H1 (cell line): ENCODE measurements at regions of chr2 and their contacts with region 1.

Region 1: DNA sequence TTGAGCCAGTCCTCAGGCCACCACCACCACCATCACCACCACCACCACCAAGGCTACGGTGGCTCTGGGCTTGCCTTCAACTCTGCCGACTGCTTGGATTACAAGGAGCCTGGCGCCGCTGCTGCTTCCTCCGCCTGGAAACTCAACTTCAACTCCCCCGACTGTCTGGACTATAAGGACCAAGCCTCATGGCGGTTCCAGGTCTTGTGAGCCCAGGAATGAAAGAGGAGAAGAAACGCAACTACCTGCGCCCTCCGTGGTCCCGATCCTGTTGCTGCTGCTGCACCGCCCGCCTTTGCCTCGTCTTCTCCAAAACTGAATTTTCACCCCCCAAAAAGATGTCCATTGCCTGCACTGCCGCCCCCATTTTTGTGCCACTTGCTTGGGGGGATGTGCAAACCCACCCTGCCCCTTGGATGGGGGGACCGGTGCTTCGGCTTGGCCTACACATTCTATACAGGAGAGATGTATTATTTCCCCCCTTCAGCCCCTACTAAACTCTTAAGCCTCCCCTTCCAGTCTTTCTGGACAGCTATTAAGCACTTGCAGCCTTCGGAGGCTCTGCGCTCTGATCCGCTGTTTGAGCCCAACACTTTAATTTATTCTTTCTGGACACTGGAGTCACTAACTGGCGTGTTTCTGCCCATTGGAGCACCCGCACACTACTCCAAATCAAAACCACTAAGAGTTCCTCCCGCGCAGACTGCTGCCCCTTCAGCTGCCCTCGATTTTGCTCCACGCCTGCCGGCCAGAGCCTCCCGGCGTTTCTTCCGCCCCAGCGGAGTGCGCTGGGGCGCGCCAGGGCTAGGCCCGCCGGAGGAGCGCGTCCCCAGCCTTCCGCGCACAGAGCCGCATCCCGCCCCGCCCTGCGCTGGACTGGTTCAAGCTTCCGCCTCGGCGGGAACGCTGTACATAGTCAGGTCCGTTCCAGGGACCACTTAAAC is 5.7 kb downstream of the OTX1 start:
- DNase-seq: peak in 1 of 2 experiments; percentile 56
- H3K4me3 ChIP-seq: peak overlapping the region in 2 of 4 experiments; percentile 7 to 74; a peak in 5 of 8 replicates
- H3K27ac ChIP-seq: no peak overlapping the region
- H3K4me1 ChIP-seq: peaks cover 9 to 60% (median 48%) of the 10 kb centered on the region in 4 experiments
- H3K27me3 ChIP-seq: peaks cover 74 to 99% (median 93%) of the 10 kb centered on the region in 4 experiments
- CTCF ChIP-seq: peak in 1 of 3 experiments; percentile 3; a peak in 1 of 4 replicates
- EP300 ChIP-seq: no peak
- POLR2A ChIP-seq: no peak
- RAD21 ChIP-seq: no peak

Region 2: GRCh38 chr2:63044362-63045327 is 11.7 kb before region 1 on chr2:
- CTCF ChIA-PET with region 1: interaction called, 50 read pairs
- POLR2A ChIA-PET with region 1: interaction called, 32 read pairs
- DNase-seq: peak in 1 of 2 experiments; percentile 82
- H3K4me3 ChIP-seq: peak overlapping the region; percentile 26 to 74 (median 42)
- H3K27ac ChIP-seq: peak overlapping the region; percentile 32; the same call in 1 of the 2 replicates
- H3K4me1 ChIP-seq: peaks cover 7 to 32% (median 16%) of the 10 kb centered on the region in 4 experiments
- H3K27me3 ChIP-seq: peaks cover 0 to 46% (median 33%) of the 10 kb centered on the region in 4 experiments; a peak in 5 of 7 replicates
- CTCF ChIP-seq: no peak
- EP300 ChIP-seq: peak in 1 of 2 experiments; percentile 76; a peak in 1 of 3 replicates
- POLR2A ChIP-seq: peak in 1 of 2 experiments; percentile 64; a peak in 1 of 3 replicates
- RAD21 ChIP-seq: no peak